ENCODE measurements at regions of chr17 and their contacts with region 1.

Region 1: GRCh38 chr17:76523084-76524037 is 14.1 kb downstream of the CYGB start:
- DNase-seq: peak; percentile 76
- H3K4me3 Mint-ChIP-seq: peak overlapping the region; percentile 30
- H3K27ac Mint-ChIP-seq: no peak overlapping the region
- H3K4me1 Mint-ChIP-seq: peaks cover 21% of the 10 kb centered on the region
- H3K27me3 Mint-ChIP-seq: peaks cover 10% of the 10 kb centered on the region

Region 2: DNA sequence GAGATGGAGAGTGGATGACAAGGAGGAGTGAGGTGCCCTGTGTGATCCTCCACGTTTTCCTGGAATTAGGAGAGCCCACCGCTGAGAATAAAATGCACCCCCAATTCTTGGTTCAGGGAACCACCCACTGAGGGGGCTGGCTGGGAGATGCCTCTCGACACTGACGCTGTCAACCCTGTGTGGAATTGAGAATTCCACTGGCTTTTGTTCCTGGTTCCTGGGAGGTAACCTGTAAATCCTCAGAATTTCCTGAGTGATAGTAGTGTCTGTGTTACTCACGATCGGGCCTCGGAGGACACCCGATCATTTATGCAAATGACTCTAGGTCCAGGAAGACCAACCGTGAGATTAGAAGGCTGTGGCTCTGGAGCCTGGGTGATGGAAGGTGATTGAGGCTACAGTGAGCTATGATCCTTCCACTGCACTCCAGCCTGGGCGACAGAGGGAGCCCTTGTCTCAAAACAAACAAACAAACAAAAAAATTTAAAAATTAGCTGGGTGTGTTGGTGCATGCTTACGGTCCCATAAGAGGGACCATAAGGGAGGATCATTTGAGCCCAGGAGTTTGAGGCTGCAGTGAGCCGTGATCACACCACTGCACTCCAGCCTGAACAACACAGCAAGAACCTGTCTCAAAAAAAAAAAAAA is 158.0 kb before region 1 on chr17:
- intact Hi-C with region 1: no loop called
- DNase-seq: no peak
- H3K4me3 Mint-ChIP-seq: no peak overlapping the region
- H3K27ac Mint-ChIP-seq: no peak overlapping the region
- H3K4me1 Mint-ChIP-seq: no peaks in the 10 kb centered on the region
- H3K27me3 Mint-ChIP-seq: peaks cover 3% of the 10 kb centered on the region

Region 3: GRCh38 chr17:76506408-76507349 is 16.7 kb before region 1 on chr17:
- intact Hi-C with region 1: no loop called
- DNase-seq: peak; percentile 85
- H3K4me3 Mint-ChIP-seq: no peak overlapping the region
- H3K27ac Mint-ChIP-seq: peak overlapping the region; percentile 58
- H3K4me1 Mint-ChIP-seq: peaks cover 41% of the 10 kb centered on the region
- H3K27me3 Mint-ChIP-seq: peaks cover 2% of the 10 kb centered on the region

Region 4: GRCh38 chr17:76547184-76547641 is 23.9 kb after region 1 on chr17:
- intact Hi-C with region 1: loop called (anchors 1 kb)
- DNase-seq: peak; percentile 28
- H3K4me3 Mint-ChIP-seq: no peak overlapping the region
- H3K27ac Mint-ChIP-seq: no peak overlapping the region
- H3K4me1 Mint-ChIP-seq: peaks cover 5% of the 10 kb centered on the region
- H3K27me3 Mint-ChIP-seq: peaks cover 11% of the 10 kb centered on the region

Region 5: GRCh38 chr17:76585818-76586593 is 62.6 kb after region 1 on chr17 and contains the start of gene ST6GALNAC2:
- intact Hi-C with region 1: loop called (anchors 2 kb)
- DNase-seq: peak; percentile 14
- H3K4me3 Mint-ChIP-seq: peak within 1 kb of the TSS; percentile 63
- H3K27ac Mint-ChIP-seq: no peak within 1 kb of the TSS
- H3K4me1 Mint-ChIP-seq: peaks cover 5% of the 10 kb centered on the region
- H3K27me3 Mint-ChIP-seq: peaks cover 81% of the 10 kb centered on the region
- total RNA-seq, gene ST6GALNAC2: not detected in 2 replicates

Region 6: DNA sequence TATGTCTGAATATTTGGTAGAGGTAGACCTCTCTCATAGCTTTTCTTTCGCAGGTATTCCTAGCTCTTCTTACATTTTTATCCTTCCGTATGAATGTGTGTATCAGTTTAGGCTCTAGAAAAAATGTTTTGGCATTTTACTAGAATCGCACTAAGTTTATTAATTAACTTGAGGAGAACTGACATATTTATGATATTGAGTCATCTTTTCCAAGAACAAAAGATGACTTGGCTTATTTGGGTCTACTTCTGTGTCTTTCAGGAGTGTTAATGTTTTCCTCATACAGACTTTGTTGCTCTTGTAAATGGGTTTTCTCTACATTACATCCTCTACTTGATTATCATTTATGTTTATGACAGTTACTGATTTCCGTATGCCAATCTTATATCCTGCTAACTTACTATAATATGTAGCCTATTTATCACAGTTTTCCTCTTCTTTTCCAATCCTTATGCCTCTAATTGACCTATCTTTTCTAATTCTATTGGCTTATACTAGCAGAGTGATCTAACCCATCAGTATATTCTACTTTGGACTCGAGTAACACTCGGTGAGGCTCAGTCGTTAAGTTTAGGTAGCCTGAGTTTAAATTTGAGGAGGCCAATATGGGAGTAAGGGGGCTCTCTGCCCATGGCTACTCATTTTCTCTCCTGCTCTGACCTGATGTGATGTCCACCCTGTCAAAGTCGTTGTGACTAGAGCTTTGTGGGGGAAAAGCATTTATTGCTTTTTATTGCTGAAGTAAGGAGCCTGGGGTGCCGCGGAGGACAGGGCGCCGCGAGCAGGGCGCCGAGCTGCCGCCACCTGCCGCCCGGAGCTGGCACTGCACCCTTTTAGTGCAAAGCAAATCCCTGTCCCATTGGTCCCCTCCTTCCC is 100.1 kb after region 1 on chr17:
- intact Hi-C with region 1: loop called (anchors 1 kb)
- DNase-seq: peak; percentile 59
- H3K4me3 Mint-ChIP-seq: no peak overlapping the region
- H3K27ac Mint-ChIP-seq: no peak overlapping the region
- H3K4me1 Mint-ChIP-seq: peaks cover 7% of the 10 kb centered on the region
- H3K27me3 Mint-ChIP-seq: peaks cover 12% of the 10 kb centered on the region

Region 7: DNA sequence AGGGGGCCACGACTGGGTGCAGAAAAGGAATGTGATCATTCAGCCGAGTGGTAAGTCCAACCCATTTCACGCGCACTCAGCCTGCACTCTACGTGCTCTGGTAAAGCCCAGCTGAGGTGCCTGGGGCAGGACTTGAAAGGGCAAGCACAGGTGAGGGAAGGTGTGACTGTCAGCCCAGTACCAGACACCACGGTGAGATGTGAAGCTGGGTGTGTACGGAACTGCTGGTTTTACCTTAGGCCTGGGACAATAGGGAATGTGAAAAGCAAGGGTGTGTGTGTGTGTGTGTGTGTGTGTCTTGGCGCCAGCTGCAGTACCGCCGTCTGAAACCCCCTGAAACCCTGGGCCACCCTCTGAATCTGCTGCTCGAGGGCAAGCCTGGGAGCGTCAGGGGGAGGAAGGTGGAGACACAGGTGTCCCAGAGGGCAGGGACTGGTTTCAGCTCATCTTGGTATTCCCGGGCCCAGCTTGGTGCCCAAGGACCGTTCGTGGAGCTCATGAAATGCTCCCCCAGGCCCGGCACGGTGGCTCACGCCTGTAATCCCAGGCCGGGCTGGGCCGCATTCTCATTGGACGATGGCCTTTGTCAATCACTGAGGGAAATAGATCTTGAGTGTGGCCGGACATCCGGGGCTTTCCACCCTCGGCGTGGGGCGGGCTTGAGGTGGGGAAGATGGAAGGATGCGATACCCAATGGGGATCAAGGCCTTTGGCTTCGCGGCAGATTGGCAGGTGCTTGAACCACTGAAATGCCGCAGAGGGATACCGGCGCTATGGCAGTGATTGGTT is 148.0 kb after region 1 on chr17:
- intact Hi-C with region 1: loop called (anchors 5 kb)
- DNase-seq: peak; percentile 99
- H3K4me3 Mint-ChIP-seq: peak overlapping the region; percentile 93
- H3K27ac Mint-ChIP-seq: peak overlapping the region; percentile 90
- H3K4me1 Mint-ChIP-seq: peaks cover 30% of the 10 kb centered on the region
- H3K27me3 Mint-ChIP-seq: peaks cover 10% of the 10 kb centered on the region

Region 8: DNA sequence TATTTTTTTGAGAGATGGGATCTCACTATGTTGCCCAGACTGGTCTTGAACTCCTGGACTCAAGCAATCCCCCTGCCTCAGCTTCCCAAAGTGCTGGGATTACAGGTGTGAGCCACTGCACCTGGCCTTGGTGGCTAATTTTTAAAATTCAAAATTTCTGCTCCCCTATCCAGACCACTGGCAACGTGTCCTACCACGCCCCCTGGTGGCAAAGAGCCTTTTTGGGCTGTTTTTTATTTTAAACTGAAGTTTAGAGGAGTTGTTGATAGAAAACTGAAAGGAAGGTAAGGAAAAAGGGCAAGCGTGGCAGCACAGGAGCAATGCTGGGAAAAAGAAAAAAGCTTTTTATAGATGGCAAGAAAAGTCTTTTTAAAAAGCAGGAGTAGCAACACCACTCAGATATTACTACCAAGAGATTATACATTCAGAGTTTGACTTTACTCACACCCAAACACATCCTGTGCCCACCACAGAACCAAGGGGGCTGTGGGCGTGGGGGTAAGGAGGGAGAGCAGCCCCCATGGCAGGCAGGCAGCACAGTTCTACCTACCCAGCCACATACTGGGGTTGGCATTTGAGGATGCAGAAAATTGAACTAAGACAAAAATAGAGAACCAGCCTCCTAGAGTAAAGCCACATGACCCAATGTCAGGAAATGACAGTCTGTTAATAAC is 191.6 kb after region 1 on chr17:
- intact Hi-C with region 1: loop called (anchors 2 kb)
- DNase-seq: peak; percentile 62
- H3K4me3 Mint-ChIP-seq: no peak overlapping the region
- H3K27ac Mint-ChIP-seq: peak overlapping the region; percentile 16
- H3K4me1 Mint-ChIP-seq: peaks cover 34% of the 10 kb centered on the region
- H3K27me3 Mint-ChIP-seq: no peaks in the 10 kb centered on the region